Activated CD8-positive, alpha-beta T cell treated with anti-CD3 and anti-CD28 coated beads for 36 hours (primary cell): ENCODE measurements at regions of chr3 and their contacts with region 1.

Region 1: GRCh38 chr3:183188895-183189462 is 26.4 kb upstream of the LAMP3 start:
- DNase-seq: peak; percentile 64
- ATAC-seq: peak; percentile 46
- H3K4me3 Mint-ChIP-seq: no peak overlapping the region
- H3K27ac Mint-ChIP-seq: no peak overlapping the region
- H3K4me1 Mint-ChIP-seq: peaks cover 26% of the 10 kb centered on the region
- H3K27me3 Mint-ChIP-seq: no peaks in the 10 kb centered on the region
- CTCF ChIP-seq: peak; percentile 28

Region 2: DNA sequence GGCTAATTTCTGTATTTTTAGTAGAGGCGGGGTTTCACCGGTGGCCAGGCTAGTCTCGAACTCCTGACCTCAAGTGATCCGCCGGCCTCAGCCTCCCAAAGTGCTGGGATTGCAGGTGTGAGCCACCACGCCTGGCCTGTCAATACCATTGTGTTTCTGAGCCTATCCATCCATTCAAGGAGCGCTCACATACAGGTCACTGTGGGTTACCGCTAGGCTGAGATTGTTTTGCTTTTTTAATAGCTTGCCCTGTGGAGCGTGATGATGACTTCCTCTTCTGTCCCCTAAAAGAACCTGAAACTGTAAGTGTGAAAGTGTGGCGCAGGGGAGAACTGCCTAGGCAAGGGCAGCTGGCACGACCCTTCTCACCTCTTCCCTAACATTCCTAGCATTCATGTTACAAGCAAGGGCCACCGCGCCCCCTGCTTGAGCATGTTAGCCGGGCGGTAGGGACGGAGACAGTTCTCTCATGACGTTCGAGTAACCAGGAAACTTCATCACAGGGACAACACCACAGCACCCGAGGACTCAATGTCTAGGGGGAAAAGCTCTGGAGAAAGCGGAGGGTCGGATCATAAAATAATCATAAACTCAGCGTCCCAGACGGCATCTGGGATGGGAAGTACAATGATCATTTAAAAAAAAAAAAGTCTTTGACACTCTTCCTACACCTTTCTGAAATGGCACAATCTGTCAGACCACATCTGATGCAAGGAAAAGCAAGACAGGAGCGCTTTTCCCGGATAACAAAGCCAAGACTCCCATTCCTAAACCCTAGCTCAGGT is 27.2 kb before region 1 on chr3:
- CTCF ChIA-PET with region 1: interaction called, 14 read pairs
- POLR2A ChIA-PET with region 1: no interaction called
- intact Hi-C with region 1: no loop called
- DNase-seq: peak; percentile 39
- ATAC-seq: peak; percentile 22
- H3K4me3 Mint-ChIP-seq: peak overlapping the region; percentile 87
- H3K27ac Mint-ChIP-seq: peak overlapping the region; percentile 87
- H3K4me1 Mint-ChIP-seq: peaks cover 39% of the 10 kb centered on the region
- H3K27me3 Mint-ChIP-seq: no peaks in the 10 kb centered on the region
- CTCF ChIP-seq: no peak

Region 3: DNA sequence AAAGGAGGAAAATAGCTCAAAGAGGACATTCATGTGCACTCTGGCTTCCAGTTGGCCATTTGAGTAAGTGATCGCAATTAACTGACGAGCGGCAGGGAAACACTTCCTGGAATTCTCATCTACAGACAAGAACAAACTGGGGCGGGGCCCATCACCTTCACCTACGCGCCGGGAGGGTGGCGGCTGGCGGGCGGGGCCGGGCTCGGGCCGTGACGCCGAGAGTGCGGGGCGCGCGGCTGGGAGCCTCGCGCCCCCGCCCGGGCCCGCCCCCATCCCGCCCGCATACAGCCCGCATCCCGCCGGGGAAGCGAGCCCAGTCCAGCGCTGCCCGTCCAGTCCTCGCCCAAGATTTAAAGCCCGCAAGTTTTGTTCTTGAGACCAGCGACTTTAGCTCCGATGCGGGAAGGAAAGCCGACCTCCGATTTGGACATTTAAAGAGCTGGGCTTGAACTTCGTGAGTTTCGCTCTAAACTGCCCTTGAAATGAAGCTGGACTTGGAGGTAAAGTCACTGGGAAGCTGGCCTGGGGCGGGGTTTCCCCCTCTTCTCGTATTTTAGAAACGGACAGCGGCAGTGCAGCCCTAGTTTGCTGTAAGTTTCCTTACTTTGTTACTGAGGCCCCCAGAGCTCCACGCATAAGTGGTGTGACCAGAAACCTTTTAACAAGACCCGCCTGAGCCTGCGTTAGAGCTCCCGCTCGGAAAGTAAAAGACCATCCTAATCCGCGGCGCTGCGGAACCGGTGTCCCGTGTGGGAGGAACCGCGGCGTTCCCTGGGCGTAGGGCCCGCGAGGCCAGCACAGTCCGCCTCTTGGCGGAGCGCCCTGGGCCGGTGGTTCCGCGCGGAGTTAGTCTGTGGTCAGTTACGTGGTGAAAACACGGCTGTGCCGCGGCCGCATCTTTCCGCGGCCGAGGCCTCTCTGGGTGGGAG is 64.3 kb after region 1 on chr3 and contains the start of gene B3GNT5:
- CTCF ChIA-PET with region 1: interaction called, 20 read pairs
- POLR2A ChIA-PET with region 1: interaction called, 3 read pairs
- intact Hi-C with region 1: no loop called
- DNase-seq: peak; percentile 66
- ATAC-seq: peak; percentile 46
- H3K4me3 Mint-ChIP-seq: peak within 1 kb of the TSS; percentile 81
- H3K27ac Mint-ChIP-seq: peak within 1 kb of the TSS; percentile 78
- H3K4me1 Mint-ChIP-seq: peaks cover 24% of the 10 kb centered on the region
- H3K27me3 Mint-ChIP-seq: peaks cover 4% of the 10 kb centered on the region
- CTCF ChIP-seq: no peak
- total RNA-seq, gene B3GNT5: 25.8 to 26.1 TPM

Region 4: GRCh38 chr3:183285828-183286457 is 97.0 kb after region 1 on chr3:
- CTCF ChIA-PET with region 1: interaction called, 13 read pairs
- POLR2A ChIA-PET with region 1: interaction called, 8 read pairs
- intact Hi-C with region 1: no loop called
- DNase-seq: peak; percentile 98
- ATAC-seq: peak; percentile 90
- H3K4me3 Mint-ChIP-seq: peak overlapping the region; percentile 61
- H3K27ac Mint-ChIP-seq: peak overlapping the region; percentile 97
- H3K4me1 Mint-ChIP-seq: peaks cover 40% of the 10 kb centered on the region
- H3K27me3 Mint-ChIP-seq: no peaks in the 10 kb centered on the region
- CTCF ChIP-seq: no peak

Region 5: GRCh38 chr3:183385698-183386613 is 197.0 kb after region 1 on chr3:
- CTCF ChIA-PET with region 1: interaction called, 277 read pairs
- POLR2A ChIA-PET with region 1: no interaction called
- intact Hi-C with region 1: loop called (anchors 1 kb)
- DNase-seq: peak; percentile 77
- ATAC-seq: peak; percentile 76
- H3K4me3 Mint-ChIP-seq: no peak overlapping the region
- H3K27ac Mint-ChIP-seq: peak overlapping the region; percentile 39
- H3K4me1 Mint-ChIP-seq: peaks cover 11% of the 10 kb centered on the region
- H3K27me3 Mint-ChIP-seq: no peaks in the 10 kb centered on the region
- CTCF ChIP-seq: peak; percentile 72